GM12878 (cell line): ENCODE measurements at regions of chr3 and their contacts with region 1.

Region 1: GRCh38 chr3:14508961-14509795 is 31.0 kb downstream of the GRIP2 start:
- DNase-seq: no peak
- ATAC-seq: peak; percentile 93
- H3K4me3 ChIP-seq: no peak overlapping the region
- H3K27ac ChIP-seq: no peak overlapping the region
- H3K4me1 ChIP-seq: no peaks in the 10 kb centered on the region
- H3K27me3 ChIP-seq: no peaks in the 10 kb centered on the region; a peak in 1 of 4 replicates
- CTCF ChIP-seq: peak; percentile 71 to 88 (median 73)
- EP300 ChIP-seq: no peak
- POLR2A ChIP-seq: no peak
- RAD21 ChIP-seq: peak; percentile 54

Region 2: GRCh38 chr3:14548321-14548729 is 39.1 kb after region 1 on chr3:
- CTCF ChIA-PET with region 1: interaction called, 3 read pairs
- POLR2A ChIA-PET with region 1: no interaction called
- RAD21 ChIA-PET with region 1: no interaction called
- SMC1A ChIA-PET with region 1: no interaction called
- in situ Hi-C with region 1: no loop called
- intact Hi-C with region 1: loop called (anchors 2 kb)
- DNase-seq: no peak
- ATAC-seq: peak; percentile 89
- H3K4me3 ChIP-seq: no peak overlapping the region
- H3K27ac ChIP-seq: no peak overlapping the region
- H3K4me1 ChIP-seq: no peaks in the 10 kb centered on the region
- H3K27me3 ChIP-seq: peaks cover 2 to 3% of the 10 kb centered on the region in 2 experiments; a peak in 2 of 4 replicates
- CTCF ChIP-seq: peak; percentile 57 to 69 (median 60); a peak in 5 of 6 replicates
- EP300 ChIP-seq: no peak
- POLR2A ChIP-seq: no peak
- RAD21 ChIP-seq: peak; percentile 66

Region 3: GRCh38 chr3:14633819-14634424 is 124.7 kb after region 1 on chr3:
- CTCF ChIA-PET with region 1: interaction called, 3 read pairs
- POLR2A ChIA-PET with region 1: no interaction called
- RAD21 ChIA-PET with region 1: no interaction called
- SMC1A ChIA-PET with region 1: interaction called, 3 read pairs
- in situ Hi-C with region 1: no loop called
- intact Hi-C with region 1: loop called (anchors 10 kb)
- DNase-seq: peak; percentile 17
- ATAC-seq: peak; percentile 98
- H3K4me3 ChIP-seq: no peak overlapping the region
- H3K27ac ChIP-seq: no peak overlapping the region
- H3K4me1 ChIP-seq: no peaks in the 10 kb centered on the region
- H3K27me3 ChIP-seq: peaks cover under 1 to 6% of the 10 kb centered on the region in 2 experiments; a peak in 3 of 4 replicates
- CTCF ChIP-seq: peak; percentile 70 to 92 (median 85)
- EP300 ChIP-seq: no peak
- POLR2A ChIP-seq: no peak
- RAD21 ChIP-seq: peak; percentile 64

Region 4: DNA sequence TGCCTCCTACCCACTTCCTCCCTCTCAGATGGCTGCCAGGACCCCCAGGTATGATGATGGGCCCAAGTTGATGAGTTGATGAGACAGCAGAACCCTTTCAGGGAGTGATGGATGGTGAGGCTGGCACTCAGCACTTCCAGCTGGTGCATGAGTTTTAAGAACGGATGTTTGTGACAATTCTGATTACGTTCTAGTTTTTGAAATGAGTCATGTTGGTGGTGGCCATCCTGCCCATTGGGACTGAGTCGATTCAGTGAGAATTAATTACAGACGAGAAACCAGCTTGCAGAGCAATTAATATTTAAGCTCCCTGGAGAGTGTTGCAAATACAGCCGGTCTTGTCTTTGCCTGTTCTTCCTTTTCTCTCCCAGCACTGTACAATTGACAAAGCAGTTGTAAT is 381.3 kb after region 1 on chr3:
- CTCF ChIA-PET with region 1: no interaction called
- POLR2A ChIA-PET with region 1: no interaction called
- RAD21 ChIA-PET with region 1: no interaction called
- SMC1A ChIA-PET with region 1: no interaction called
- in situ Hi-C with region 1: no loop called
- intact Hi-C with region 1: no loop called
- DNase-seq: peak; percentile 20
- ATAC-seq: peak; percentile 89
- H3K4me3 ChIP-seq: no peak overlapping the region
- H3K27ac ChIP-seq: no peak overlapping the region
- H3K4me1 ChIP-seq: no peaks in the 10 kb centered on the region
- H3K27me3 ChIP-seq: peaks cover 0 to 4% of the 10 kb centered on the region in 2 experiments; a peak in 2 of 4 replicates
- CTCF ChIP-seq: no peak
- EP300 ChIP-seq: no peak
- POLR2A ChIP-seq: no peak
- RAD21 ChIP-seq: no peak